ENCODE measurements at regions of chr9 and their contacts with region 1.

Region 1: DNA sequence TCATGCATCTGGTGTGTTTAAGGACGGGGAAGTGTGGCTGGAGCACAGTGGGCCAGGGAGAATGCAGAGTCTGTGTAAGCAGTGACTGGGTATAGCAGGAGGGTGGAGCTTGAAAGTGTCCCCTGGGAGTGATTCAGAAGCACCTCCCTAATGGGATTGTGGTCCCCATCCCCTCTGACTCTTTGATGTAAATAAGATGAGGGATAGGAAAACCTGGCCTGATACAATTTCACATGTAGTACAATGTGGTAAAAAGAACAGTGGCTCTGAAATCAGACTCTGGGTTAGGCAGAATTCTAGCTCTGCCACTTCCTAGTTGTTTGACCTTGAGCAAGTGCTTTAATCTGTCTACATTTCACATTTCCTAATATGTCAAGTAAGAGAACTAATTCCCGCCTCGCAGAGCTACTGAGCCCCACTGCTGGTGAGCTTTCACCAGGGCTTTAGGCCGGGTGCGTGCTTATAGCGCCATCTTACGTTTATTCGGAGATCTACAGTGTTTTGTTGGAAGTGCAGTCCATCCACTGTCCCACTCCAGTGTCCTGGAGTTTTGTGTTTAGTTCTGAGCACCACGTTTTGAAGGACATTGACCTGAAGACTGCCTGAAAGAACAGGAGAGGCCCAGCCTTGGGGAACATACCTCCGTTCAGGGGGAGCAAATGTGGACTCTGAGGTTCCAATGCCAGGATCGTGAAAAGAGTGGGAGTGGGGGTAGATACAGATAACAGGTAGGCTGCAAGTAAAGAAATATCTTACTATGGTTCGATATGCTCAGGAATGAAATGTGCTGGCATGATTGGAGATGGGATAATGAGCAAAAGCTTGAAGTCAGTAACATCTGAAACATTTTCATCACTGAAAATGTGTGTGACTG is 51.2 kb upstream of the TESK1 start:
- DNase-seq: peak in 4 of 5 donors; percentile 74 to 75 (median 74)
- ATAC-seq: peak; percentile 74 to 86 (median 85)
- H3K4me3 ChIP-seq: no peak overlapping the region
- H3K27ac ChIP-seq: peak overlapping the region in 10 of 12 donors; percentile 2 to 77 (median 56)
- H3K4me1 ChIP-seq: peaks cover 0 to 44% (median 21%) of the 10 kb centered on the region in 12 donors
- H3K27me3 ChIP-seq: no peaks in the 10 kb centered on the region
- CTCF ChIP-seq: peak; percentile 79 to 96 (median 93)
- POLR2A ChIP-seq: no peak

Region 2: DNA sequence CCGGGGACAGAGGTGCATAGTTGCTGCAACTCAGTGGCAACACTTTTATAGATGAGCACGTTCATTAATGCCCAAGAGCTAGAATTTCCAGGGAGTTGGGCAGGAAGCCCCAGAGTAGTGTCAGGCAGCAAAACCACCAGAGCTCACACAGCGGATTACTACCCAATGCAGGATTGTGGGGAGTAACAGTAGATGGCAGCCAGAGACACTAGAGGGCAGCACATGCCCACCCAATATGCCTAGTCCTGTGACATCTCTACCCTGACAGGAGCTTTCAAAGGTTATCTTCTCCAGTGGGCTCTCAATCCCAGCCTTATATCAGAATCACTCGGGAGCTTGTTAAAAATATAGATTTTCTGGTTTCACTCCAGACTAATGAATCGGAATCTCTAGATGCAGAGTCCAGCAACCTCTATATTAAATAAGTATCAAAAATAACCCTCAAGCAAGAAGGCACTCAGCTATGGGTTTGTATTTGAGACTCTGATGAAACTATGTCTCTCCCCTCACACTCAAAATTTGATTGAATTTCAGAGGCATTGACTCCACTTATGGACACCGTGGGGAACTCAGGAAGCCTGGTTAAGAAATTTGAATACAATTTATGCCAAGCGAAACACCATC is 654.3 kb before region 1 on chr9:
- intact Hi-C with region 1: loop called in 1 of 10 experiments (anchors 10 kb)
- DNase-seq: peak; percentile 71 to 81 (median 77)
- ATAC-seq: peak; percentile 92 to 100 (median 98)
- H3K4me3 ChIP-seq: no peak overlapping the region
- H3K27ac ChIP-seq: no peak overlapping the region
- H3K4me1 ChIP-seq: no peaks in the 10 kb centered on the region
- H3K27me3 ChIP-seq: peaks cover 0 to 25% (median 8%) of the 10 kb centered on the region in 9 donors
- CTCF ChIP-seq: peak; percentile 69 to 89 (median 83)
- POLR2A ChIP-seq: no peak

Region 3: GRCh38 chr9:35277628-35278359 is 276.1 kb before region 1 on chr9:
- intact Hi-C with region 1: loop called in 2 of 10 experiments (anchors 10 kb)
- DNase-seq: peak in 1 of 5 donors; percentile 8
- ATAC-seq: peak; percentile 72 to 92 (median 88)
- H3K4me3 ChIP-seq: peak overlapping the region in 3 of 12 donors; percentile 1 to 23 (median 14)
- H3K27ac ChIP-seq: peak overlapping the region in 11 of 12 donors; percentile 9 to 81 (median 31)
- H3K4me1 ChIP-seq: peaks cover 0 to 31% (median 12%) of the 10 kb centered on the region in 12 donors
- H3K27me3 ChIP-seq: no peaks in the 10 kb centered on the region
- CTCF ChIP-seq: no peak
- POLR2A ChIP-seq: no peak

Region 4: GRCh38 chr9:35322075-35322885 is 231.6 kb before region 1 on chr9:
- intact Hi-C with region 1: loop called in 1 of 10 experiments (anchors 10 kb)
- DNase-seq: no peak
- ATAC-seq: no peak
- H3K4me3 ChIP-seq: no peak overlapping the region
- H3K27ac ChIP-seq: no peak overlapping the region
- H3K4me1 ChIP-seq: no peaks in the 10 kb centered on the region
- H3K27me3 ChIP-seq: no peaks in the 10 kb centered on the region
- CTCF ChIP-seq: no peak
- POLR2A ChIP-seq: no peak

Region 5: DNA sequence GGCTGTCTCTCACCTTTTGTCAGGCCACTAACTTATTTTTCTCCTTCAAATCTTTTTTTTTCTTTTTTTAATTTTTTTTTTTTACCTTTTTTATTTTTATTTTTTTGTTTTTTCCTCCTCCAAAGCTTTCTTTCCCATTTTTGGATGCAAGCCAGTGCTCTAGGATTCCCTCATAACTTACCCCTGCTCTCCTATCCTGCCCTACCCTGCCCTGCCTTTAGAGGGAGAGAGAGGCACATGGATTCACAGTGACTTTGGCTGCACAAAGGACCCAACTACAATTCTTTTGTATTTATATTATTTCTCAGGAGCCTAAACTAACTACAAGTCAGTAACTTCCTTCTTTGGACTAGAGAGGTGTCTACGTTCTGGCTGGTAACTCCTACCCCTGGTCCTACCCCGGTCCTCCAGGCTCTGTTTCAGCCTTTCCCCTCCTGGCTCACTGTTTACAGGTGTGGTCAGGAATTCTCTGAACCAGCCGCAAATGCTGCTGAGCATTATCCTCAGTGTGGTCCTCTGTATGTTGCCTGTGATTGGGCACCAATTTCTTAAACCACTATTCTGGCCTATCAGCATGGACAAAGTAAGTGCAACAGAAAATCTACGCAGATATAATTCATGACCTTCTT is 72.4 kb before region 1 on chr9:
- intact Hi-C with region 1: loop called in 7 of 10 experiments (anchors 2 to 5 kb)
- DNase-seq: peak in 4 of 5 donors; percentile 33 to 47 (median 41)
- ATAC-seq: peak in 3 of 4 donors; percentile 50 to 66 (median 52)
- H3K4me3 ChIP-seq: no peak overlapping the region
- H3K27ac ChIP-seq: no peak overlapping the region
- H3K4me1 ChIP-seq: peaks cover 0 to 5% (median 0%) of the 10 kb centered on the region in 12 donors
- H3K27me3 ChIP-seq: no peaks in the 10 kb centered on the region
- CTCF ChIP-seq: peak; percentile 45 to 72 (median 60)
- POLR2A ChIP-seq: no peak

Region 6: GRCh38 chr9:35510745-35511428 is 43.0 kb before region 1 on chr9:
- intact Hi-C with region 1: loop called in 5 of 10 experiments (anchors 5 kb)
- DNase-seq: peak; percentile 77 to 89 (median 85)
- ATAC-seq: peak; percentile 89 to 96 (median 94)
- H3K4me3 ChIP-seq: peak overlapping the region in 4 of 12 donors; percentile 2 to 11 (median 8)
- H3K27ac ChIP-seq: peak overlapping the region; percentile 76 to 89 (median 84)
- H3K4me1 ChIP-seq: peaks cover 0 to 58% (median 32%) of the 10 kb centered on the region in 12 donors
- H3K27me3 ChIP-seq: no peaks in the 10 kb centered on the region
- CTCF ChIP-seq: peak in 11 of 12 donors; percentile 14 to 65 (median 46)
- POLR2A ChIP-seq: no peak

Region 7: GRCh38 chr9:35598866-35599590 is 45.1 kb after region 1 on chr9:
- intact Hi-C with region 1: no loop called
- DNase-seq: no peak
- ATAC-seq: no peak
- H3K4me3 ChIP-seq: no peak overlapping the region
- H3K27ac ChIP-seq: no peak overlapping the region
- H3K4me1 ChIP-seq: peaks cover 0 to 12% (median 9%) of the 10 kb centered on the region in 12 donors
- H3K27me3 ChIP-seq: no peaks in the 10 kb centered on the region
- CTCF ChIP-seq: no peak
- POLR2A ChIP-seq: no peak

Region 8: DNA sequence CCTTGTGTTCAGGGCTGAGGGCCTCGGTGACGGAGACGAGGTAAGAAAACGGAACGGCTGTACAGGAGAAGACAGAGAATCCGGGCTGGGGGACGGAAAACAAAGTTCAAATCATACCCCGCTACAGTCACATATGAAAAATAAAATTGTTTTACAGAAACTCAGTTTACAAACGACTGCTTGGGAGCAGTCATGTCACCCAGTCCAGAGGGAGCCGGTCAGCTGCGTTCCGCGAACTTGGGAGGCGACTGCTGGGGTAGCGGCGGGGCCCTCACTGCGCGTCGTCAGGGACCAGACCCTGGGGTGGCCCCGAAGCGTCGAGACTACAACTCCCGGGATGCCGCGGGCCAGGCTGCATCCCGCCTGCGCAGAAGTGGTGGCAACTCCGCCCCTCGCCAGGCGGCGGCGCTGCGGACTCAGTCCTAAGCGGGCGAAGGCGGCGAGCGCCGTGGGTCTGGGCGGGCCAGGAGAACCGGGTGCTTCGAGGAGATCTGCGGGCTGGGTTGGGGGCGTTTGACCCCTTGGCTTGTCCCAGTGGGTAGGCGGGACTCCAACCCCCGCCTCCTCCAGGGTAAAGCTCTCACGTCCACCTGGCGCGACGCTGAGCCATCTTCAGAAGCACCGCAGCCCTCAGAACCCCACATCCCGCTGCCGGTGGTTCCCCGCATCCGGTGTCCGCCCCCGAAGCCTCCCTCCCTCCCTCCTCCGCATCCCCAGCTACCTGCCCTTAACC is 92.8 kb after region 1 on chr9:
- intact Hi-C with region 1: no loop called
- DNase-seq: peak; percentile 93 to 97 (median 93)
- ATAC-seq: peak; percentile 83 to 97 (median 96)
- H3K4me3 ChIP-seq: peak overlapping the region; percentile 41 to 77 (median 64)
- H3K27ac ChIP-seq: peak overlapping the region; percentile 54 to 89 (median 81)
- H3K4me1 ChIP-seq: peaks cover 0 to 63% (median 9%) of the 10 kb centered on the region in 12 donors
- H3K27me3 ChIP-seq: no peaks in the 10 kb centered on the region
- CTCF ChIP-seq: peak; percentile 92 to 99 (median 96)
- POLR2A ChIP-seq: peak in 1 of 2 donors; percentile 85

Region 9: GRCh38 chr9:35705836-35706430 is 152.0 kb after region 1 on chr9:
- intact Hi-C with region 1: no loop called
- DNase-seq: peak in 2 of 5 donors; percentile 14 to 18
- ATAC-seq: no peak
- H3K4me3 ChIP-seq: no peak overlapping the region
- H3K27ac ChIP-seq: peak overlapping the region in 1 of 12 donors; percentile 21
- H3K4me1 ChIP-seq: peaks cover 0 to 16% (median under 1%) of the 10 kb centered on the region in 12 donors
- H3K27me3 ChIP-seq: no peaks in the 10 kb centered on the region
- CTCF ChIP-seq: no peak
- POLR2A ChIP-seq: no peak

Measured in heart left ventricle (tissue), 16 donors.